CD4-positive, alpha-beta memory T cell (primary cell): ENCODE measurements at regions of chr10 and their contacts with region 1.

Region 1: DNA sequence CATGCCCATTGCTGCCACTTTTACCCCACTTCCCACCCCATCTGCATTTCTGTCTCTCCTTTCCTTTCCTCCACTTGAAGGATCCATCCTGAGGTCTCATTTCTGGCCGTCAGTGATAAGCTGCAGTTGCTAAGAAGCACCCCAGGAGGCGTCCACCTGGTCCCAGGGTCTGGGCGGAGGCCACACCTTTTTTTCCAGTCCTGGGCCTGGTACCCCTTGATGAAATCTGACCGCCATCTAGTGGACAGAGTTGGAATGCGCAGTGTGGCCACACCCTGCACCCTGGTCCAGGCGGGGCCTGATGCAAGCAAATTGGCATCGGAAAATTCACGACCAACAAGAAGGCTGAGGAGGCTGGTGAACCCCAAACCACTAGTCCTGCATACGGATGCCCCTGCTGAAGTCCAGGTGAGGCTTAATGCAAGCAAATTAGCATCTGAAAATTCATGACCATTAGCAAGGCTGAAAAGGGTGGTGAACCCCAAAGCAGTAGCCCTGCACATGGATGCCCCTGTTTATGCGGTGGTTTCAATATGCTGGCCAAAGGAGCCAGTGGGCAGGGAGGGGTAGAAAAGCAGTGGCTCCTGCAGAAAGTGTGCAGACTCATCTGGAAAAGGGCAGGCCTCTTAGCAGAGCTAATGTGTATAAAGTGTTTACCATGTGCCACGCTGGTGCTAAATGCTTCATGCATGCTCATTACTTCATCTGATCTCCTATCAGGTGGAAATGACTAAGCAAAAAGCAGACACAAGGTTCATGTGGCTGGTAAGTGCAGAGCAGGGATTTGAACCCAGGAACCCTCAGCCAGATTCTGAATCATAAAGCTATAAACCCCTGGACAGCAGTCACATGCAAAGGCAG is 43.2 kb downstream of the GPAM start:
- DNase-seq: peak; percentile 47 to 76 (median 51)
- H3K4me3 ChIP-seq: no peak overlapping the region
- H3K4me3 Mint-ChIP-seq: no peak overlapping the region
- H3K27ac ChIP-seq: no peak overlapping the region
- H3K27ac Mint-ChIP-seq: no peak overlapping the region
- H3K4me1 ChIP-seq: no peaks in the 10 kb centered on the region
- H3K4me1 Mint-ChIP-seq: no peaks in the 10 kb centered on the region
- H3K27me3 ChIP-seq: no peaks in the 10 kb centered on the region
- H3K27me3 Mint-ChIP-seq: peaks cover 0 to 5% of the 10 kb centered on the region in 2 donors

Region 2: DNA sequence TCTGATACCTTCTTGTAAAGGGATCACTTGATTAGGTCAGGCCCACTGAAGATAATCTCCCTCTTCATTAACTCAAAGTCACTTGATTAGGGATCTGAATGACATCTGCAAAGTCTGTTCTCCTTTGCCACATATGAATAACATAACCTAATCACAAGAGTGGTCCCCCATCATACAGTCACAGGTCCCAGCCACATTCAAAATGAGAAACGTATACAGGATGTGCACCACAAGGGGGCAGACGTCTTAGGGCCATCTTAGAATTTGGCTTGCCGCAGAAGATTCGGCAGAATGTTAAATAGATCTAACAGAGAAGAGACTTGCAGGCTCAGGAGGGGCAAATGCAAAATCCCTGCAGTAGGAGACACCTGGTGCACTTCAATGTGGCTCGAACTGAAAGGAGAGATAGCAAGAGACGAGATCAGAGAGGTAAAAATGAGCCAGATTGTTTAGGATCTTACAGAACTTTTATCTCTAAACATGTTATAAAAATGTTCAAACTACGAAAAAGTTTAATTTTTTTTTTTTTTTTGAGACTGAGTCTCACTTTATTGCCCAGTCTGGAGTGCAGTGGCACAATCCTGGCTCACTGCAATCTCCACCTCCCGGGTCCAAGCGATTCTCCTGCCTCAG is 1583.3 kb before region 1 on chr10:
- CTCF ChIA-PET with region 1: interaction called, 3 read pairs
- POLR2A ChIA-PET with region 1: no interaction called
- intact Hi-C with region 1: loop called (anchors 1 kb)
- DNase-seq: peak; percentile 45 to 73 (median 62)
- H3K4me3 ChIP-seq: no peak overlapping the region
- H3K4me3 Mint-ChIP-seq: peak overlapping the region in 1 of 8 donors; percentile 51
- H3K27ac ChIP-seq: no peak overlapping the region
- H3K27ac Mint-ChIP-seq: peak overlapping the region in 1 of 7 donors; percentile 61
- H3K4me1 ChIP-seq: peaks cover 4% of the 10 kb centered on the region
- H3K4me1 Mint-ChIP-seq: peaks cover 3 to 6% (median 4%) of the 10 kb centered on the region in 4 donors
- H3K27me3 ChIP-seq: no peaks in the 10 kb centered on the region
- H3K27me3 Mint-ChIP-seq: peaks cover 4 to 9% of the 10 kb centered on the region in 2 donors

Region 3: GRCh38 chr10:110610308-110610774 is 1530.0 kb before region 1 on chr10:
- CTCF ChIA-PET with region 1: interaction called, 4 read pairs
- POLR2A ChIA-PET with region 1: no interaction called
- intact Hi-C with region 1: loop called (anchors 1 kb)
- DNase-seq: peak; percentile 56 to 70 (median 63)
- H3K4me3 ChIP-seq: no peak overlapping the region
- H3K4me3 Mint-ChIP-seq: no peak overlapping the region
- H3K27ac ChIP-seq: no peak overlapping the region
- H3K27ac Mint-ChIP-seq: no peak overlapping the region
- H3K4me1 ChIP-seq: no peaks in the 10 kb centered on the region
- H3K4me1 Mint-ChIP-seq: peaks cover 0 to 17% (median 7%) of the 10 kb centered on the region in 4 donors
- H3K27me3 ChIP-seq: no peaks in the 10 kb centered on the region
- H3K27me3 Mint-ChIP-seq: no peaks in the 10 kb centered on the region

Region 4: DNA sequence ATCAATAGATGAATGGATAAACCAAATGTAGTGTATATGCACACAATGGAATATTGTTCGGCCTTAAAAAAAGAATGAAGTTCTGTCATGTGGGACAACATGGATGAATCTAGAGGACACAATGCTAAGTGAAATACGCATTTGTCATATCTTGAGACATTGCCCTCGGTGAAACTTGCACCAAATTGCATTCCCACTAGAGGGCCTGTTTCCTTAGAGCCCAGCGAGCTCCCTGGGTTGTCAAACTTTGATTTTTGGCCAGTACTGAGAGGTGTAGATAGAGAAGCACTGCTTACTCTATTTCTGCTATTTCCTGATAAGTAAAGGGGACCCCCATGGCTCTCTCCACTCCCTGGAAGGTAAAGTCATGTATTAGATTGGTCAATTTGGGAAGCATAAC is 113.9 kb before region 1 on chr10:
- CTCF ChIA-PET with region 1: no interaction called
- POLR2A ChIA-PET with region 1: no interaction called
- intact Hi-C with region 1: no loop called
- DNase-seq: no peak
- H3K4me3 ChIP-seq: no peak overlapping the region
- H3K4me3 Mint-ChIP-seq: no peak overlapping the region
- H3K27ac ChIP-seq: no peak overlapping the region
- H3K27ac Mint-ChIP-seq: no peak overlapping the region
- H3K4me1 ChIP-seq: no peaks in the 10 kb centered on the region
- H3K4me1 Mint-ChIP-seq: no peaks in the 10 kb centered on the region
- H3K27me3 ChIP-seq: no peaks in the 10 kb centered on the region
- H3K27me3 Mint-ChIP-seq: no peaks in the 10 kb centered on the region

Region 5: DNA sequence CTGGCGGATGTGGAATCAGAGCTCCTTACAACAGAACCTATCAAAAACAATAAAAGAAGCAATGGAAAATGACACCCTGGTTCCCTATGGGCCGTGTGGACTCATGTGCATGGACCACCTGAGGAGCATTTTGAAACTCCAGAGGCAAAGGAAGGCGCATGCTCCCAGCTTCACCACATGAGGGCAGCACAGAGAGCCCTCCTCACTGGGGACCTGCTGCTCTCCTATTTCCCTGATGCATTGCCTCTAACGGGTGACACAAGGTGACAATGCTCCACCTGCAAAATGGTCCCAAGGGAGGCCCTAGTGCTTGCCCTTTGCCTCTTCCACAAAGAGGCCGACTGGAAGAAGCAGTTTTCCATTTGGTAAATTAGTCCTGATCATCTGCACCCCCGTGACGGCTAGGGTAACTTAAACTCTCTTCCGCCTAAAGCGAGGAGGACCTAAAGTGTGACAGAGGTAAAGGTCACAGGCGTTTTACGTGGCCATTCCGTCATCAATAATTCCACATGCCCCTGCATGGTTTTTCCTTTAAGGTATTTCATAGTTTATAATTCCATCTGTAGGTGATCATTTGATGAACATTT is 24.4 kb before region 1 on chr10:
- CTCF ChIA-PET with region 1: interaction called, 161 read pairs
- POLR2A ChIA-PET with region 1: no interaction called
- intact Hi-C with region 1: no loop called
- DNase-seq: peak in 4 of 5 donors; percentile 11 to 23 (median 20)
- H3K4me3 ChIP-seq: no peak overlapping the region
- H3K4me3 Mint-ChIP-seq: no peak overlapping the region
- H3K27ac ChIP-seq: no peak overlapping the region
- H3K27ac Mint-ChIP-seq: no peak overlapping the region
- H3K4me1 ChIP-seq: no peaks in the 10 kb centered on the region
- H3K4me1 Mint-ChIP-seq: no peaks in the 10 kb centered on the region
- H3K27me3 ChIP-seq: no peaks in the 10 kb centered on the region
- H3K27me3 Mint-ChIP-seq: peaks cover 0 to 6% of the 10 kb centered on the region in 2 donors

Region 6: DNA sequence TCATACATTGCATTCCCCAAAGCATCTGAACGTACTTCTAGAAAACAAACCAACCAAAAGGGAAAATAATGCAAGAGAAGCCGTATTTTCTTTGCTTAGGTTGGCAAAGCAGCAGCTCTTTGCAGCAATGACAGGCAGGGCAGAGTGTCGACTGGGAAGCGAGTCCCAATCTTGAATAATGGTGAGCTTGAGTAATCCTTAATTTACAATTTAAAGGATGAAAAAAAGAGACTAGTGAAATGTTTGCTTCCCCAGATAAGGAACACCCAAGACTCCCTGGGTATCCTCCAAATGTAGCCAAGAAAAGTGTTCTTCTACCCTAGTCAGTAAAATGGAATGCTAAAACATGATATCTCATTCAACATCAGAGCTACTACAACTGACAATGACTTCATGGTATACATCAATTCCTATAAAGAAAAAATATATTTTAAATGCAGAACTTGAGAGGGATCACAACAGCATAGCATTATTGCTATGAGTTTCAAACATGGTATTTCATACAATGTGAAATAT is 11.2 kb after region 1 on chr10:
- CTCF ChIA-PET with region 1: interaction called, 58 read pairs
- POLR2A ChIA-PET with region 1: no interaction called
- intact Hi-C with region 1: no loop called
- DNase-seq: no peak
- H3K4me3 ChIP-seq: no peak overlapping the region
- H3K4me3 Mint-ChIP-seq: no peak overlapping the region
- H3K27ac ChIP-seq: no peak overlapping the region
- H3K27ac Mint-ChIP-seq: peak overlapping the region in 1 of 7 donors; percentile 64
- H3K4me1 ChIP-seq: no peaks in the 10 kb centered on the region
- H3K4me1 Mint-ChIP-seq: no peaks in the 10 kb centered on the region
- H3K27me3 ChIP-seq: no peaks in the 10 kb centered on the region
- H3K27me3 Mint-ChIP-seq: no peaks in the 10 kb centered on the region

Region 7: GRCh38 chr10:112160834-112161233 is 20.5 kb after region 1 on chr10:
- CTCF ChIA-PET with region 1: interaction called, 15 read pairs
- POLR2A ChIA-PET with region 1: no interaction called
- intact Hi-C with region 1: no loop called
- DNase-seq: no peak
- H3K4me3 ChIP-seq: no peak overlapping the region
- H3K4me3 Mint-ChIP-seq: no peak overlapping the region
- H3K27ac ChIP-seq: no peak overlapping the region
- H3K27ac Mint-ChIP-seq: no peak overlapping the region
- H3K4me1 ChIP-seq: no peaks in the 10 kb centered on the region
- H3K4me1 Mint-ChIP-seq: no peaks in the 10 kb centered on the region
- H3K27me3 ChIP-seq: no peaks in the 10 kb centered on the region
- H3K27me3 Mint-ChIP-seq: no peaks in the 10 kb centered on the region

Region 8: DNA sequence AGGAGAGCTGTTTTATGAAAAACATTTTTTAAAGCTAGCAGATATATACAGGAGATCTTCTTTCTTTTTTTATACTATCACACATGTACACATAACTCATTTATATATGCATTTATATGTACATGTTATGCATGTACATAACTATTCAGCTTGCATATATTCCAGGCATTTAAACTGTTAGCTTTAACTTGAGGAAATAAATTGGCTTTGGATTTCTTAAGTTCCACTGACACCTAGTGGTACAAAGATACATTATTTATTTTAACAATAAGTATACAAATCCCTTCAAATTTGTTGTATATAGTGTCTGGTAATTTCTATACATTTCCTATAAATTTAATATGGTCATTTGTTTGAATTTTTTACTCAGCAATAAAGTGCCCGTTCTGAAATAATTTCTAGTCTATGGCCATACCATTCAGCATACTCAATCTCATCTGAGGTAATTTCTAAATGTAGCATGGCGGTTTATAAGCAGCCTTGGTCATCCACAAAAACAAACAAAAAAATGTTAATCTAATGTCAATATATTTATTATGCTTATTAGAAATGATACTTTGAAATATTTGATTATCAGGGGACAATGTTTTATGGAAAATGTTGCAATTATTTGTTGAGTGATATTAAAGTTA is 294.8 kb after region 1 on chr10:
- CTCF ChIA-PET with region 1: interaction called, 27 read pairs
- POLR2A ChIA-PET with region 1: no interaction called
- intact Hi-C with region 1: no loop called
- DNase-seq: peak in 3 of 5 donors; percentile 13 to 28 (median 17)
- H3K4me3 ChIP-seq: no peak overlapping the region
- H3K4me3 Mint-ChIP-seq: no peak overlapping the region
- H3K27ac ChIP-seq: no peak overlapping the region
- H3K27ac Mint-ChIP-seq: peak overlapping the region in 1 of 7 donors; percentile 73
- H3K4me1 ChIP-seq: no peaks in the 10 kb centered on the region
- H3K4me1 Mint-ChIP-seq: peaks cover 0 to 3% (median 0%) of the 10 kb centered on the region in 4 donors
- H3K27me3 ChIP-seq: no peaks in the 10 kb centered on the region
- H3K27me3 Mint-ChIP-seq: no peaks in the 10 kb centered on the region